ENCODE measurements at regions of chr17 and their contacts with region 1.

Region 1: GRCh38 chr17:70158180-70158579 is 11.2 kb upstream of the KCNJ2 start:
- DNase-seq: no peak
- CTCF ChIP-seq: no peak

Region 2: DNA sequence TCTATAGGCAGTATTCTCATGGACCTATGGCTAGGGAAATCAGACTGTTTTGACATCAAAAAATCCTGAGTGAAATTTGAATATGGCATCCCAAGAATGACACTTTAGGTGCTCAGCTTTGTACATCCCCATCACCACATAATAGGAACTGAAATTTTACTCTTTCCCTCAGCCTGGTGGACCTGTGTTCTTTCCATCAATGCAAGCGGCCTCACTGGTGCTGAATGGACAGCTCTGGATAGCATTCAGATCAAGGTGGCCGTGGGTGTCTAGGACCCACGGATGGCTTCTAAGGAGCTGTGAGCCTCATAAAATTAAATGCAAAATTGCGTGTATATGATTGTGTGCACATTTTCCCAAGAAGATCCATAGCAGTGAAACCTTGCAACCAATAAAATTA is 591.0 kb before region 1 on chr17:
- in situ Hi-C with region 1: loop called (anchors 10 kb)
- DNase-seq: no peak
- CTCF ChIP-seq: no peak

Measured in GM13977 (cell line).